ENCODE measurements at regions of chr12 and their contacts with region 1.

Region 1: GRCh38 chr12:65169320-65170208 is at the start of gene LEMD3:
- DNase-seq: peak; percentile 97
- ATAC-seq: peak; percentile 94
- H3K4me3 Mint-ChIP-seq: peak within 1 kb of the TSS; percentile 92
- H3K27ac Mint-ChIP-seq: peak within 1 kb of the TSS; percentile 97
- H3K4me1 Mint-ChIP-seq: peaks cover 30% of the 10 kb centered on the region
- H3K27me3 Mint-ChIP-seq: peaks cover 3% of the 10 kb centered on the region
- total RNA-seq, gene LEMD3: 15.9 to 17.6 TPM

Region 2: DNA sequence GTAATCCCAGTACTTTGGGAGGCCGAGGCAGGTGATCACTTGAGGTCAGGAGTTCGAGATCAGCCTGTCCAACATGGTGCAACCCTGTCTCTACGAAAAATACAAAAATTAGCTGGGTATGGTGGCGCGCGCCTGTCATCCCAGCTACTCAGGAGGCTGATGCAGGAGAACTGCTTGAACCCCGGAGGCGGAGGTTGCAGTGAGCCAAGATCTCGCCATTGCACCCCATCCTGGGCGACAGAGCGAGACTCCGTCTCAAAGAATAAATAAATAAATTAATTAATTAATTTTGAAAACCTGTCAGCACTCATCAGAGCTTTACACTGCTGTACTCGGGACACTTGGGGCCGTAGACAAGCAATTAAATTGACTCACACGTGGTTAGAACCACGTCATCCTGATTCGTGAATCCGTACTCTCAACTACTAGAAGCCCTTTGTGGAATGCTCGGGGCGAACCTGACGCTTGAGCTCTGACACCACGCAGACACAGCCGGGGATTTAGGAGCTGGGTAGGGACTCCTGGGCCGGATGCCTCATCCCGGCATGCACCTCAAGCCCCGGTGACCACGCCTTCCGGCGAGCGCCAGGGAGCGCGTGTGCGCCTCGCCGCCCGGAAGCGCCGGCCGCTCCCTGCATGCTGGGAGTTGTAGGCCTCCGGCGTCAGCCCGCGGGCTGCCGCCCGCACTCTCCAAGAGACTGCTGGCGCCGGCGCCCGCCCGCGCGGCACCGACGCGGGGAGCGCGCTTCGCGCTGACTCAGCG is 765.7 kb before region 1 on chr12 and contains the start of gene XPOT:
- CTCF ChIA-PET with region 1: no interaction called
- POLR2A ChIA-PET with region 1: interaction called, 3 read pairs
- intact Hi-C with region 1: loop called in 1 of 2 experiments (anchors 2 kb)
- DNase-seq: peak; percentile 97
- ATAC-seq: peak; percentile 90
- H3K4me3 Mint-ChIP-seq: peak within 1 kb of the TSS; percentile 97
- H3K27ac Mint-ChIP-seq: peak within 1 kb of the TSS; percentile 96
- H3K4me1 Mint-ChIP-seq: peaks cover 38% of the 10 kb centered on the region
- H3K27me3 Mint-ChIP-seq: no peaks in the 10 kb centered on the region
- total RNA-seq, gene XPOT: 179 to 187 TPM

Region 3: GRCh38 chr12:64759035-64759901 is 410.3 kb before region 1 on chr12 and contains the start of gene GNS:
- CTCF ChIA-PET with region 1: no interaction called
- POLR2A ChIA-PET with region 1: no interaction called
- intact Hi-C with region 1: loop called in 1 of 2 experiments (anchors 1 kb)
- DNase-seq: peak; percentile 97
- ATAC-seq: peak; percentile 88
- H3K4me3 Mint-ChIP-seq: peak within 1 kb of the TSS; percentile 88
- H3K27ac Mint-ChIP-seq: peak within 1 kb of the TSS; percentile 96
- H3K4me1 Mint-ChIP-seq: peaks cover 46% of the 10 kb centered on the region
- H3K27me3 Mint-ChIP-seq: no peaks in the 10 kb centered on the region
- total RNA-seq, gene GNS: 19.9 to 21.9 TPM

Region 4: DNA sequence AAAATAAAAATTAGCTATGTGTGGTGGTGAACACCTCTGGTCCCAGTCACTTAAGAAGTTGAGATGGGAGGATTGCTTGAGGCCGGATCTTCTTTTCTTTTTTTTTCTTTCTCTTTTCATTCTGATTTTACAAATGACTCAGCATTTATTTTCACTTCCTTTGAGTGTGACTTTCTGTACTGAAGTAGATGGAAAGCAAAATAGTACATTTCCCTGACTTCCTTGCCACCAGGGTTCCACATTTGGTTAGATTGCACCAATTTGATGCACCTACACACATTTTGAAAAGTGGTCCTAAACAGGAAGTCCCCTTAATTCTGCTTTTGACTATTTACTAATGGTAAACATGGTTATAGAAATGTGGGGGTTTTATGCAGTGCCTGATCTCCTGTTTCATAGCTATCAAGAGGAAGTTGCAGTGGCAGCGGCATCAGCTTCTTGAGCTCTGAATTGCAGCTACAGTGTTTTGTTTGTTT is 13.2 kb before region 1 on chr12:
- CTCF ChIA-PET with region 1: interaction called, 22 read pairs
- POLR2A ChIA-PET with region 1: interaction called, 14 read pairs
- intact Hi-C with region 1: loop called (anchors 1 kb)
- DNase-seq: peak; percentile 44
- ATAC-seq: peak; percentile 85
- H3K4me3 Mint-ChIP-seq: peak overlapping the region; percentile 3
- H3K27ac Mint-ChIP-seq: peak overlapping the region; percentile 82
- H3K4me1 Mint-ChIP-seq: peaks cover 17% of the 10 kb centered on the region
- H3K27me3 Mint-ChIP-seq: peaks cover 20% of the 10 kb centered on the region

Region 5: GRCh38 chr12:65232476-65233077 is 63.0 kb after region 1 on chr12:
- CTCF ChIA-PET with region 1: interaction called, 19 read pairs
- POLR2A ChIA-PET with region 1: no interaction called
- intact Hi-C with region 1: loop called (anchors 1 to 2 kb)
- DNase-seq: no peak
- ATAC-seq: no peak
- H3K4me3 Mint-ChIP-seq: no peak overlapping the region
- H3K27ac Mint-ChIP-seq: no peak overlapping the region
- H3K4me1 Mint-ChIP-seq: peaks cover 13% of the 10 kb centered on the region
- H3K27me3 Mint-ChIP-seq: no peaks in the 10 kb centered on the region

Region 6: DNA sequence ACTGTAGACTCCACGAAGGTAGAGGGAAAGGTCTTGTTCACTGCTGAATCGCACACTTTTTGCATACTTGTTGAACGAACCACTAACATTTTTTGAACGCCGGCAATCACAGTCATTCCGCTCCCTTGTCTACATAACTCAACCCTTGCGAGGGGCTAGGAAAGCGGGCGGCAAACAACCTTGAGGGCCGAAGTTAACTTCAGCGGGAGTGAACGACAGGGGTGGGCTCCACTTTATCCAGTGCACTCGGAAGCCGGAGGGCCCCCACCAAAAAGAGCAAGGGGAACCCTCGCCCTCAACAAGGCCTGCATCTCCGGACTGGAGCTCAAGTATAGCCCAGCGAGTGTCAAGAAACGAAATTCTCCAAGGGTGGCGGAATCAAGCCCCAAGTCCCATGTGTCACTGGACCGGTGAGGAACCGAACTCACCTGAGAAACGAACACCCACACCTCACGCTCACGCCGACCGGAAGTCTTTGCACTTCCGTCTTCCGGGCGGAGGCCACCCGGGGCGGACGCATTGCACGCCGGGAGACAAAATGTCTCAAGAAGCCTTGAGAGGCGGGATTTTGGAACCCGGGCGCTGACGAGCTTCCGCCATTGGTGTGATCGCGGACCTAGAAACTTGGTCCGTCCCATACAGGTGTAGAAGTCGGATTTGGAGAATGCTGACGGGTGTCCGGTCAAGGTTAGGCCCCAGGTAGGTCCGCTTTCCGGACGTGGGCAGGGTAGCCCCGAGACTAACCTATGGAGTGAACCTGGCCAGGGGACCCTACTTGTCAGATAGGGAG is 960.9 kb after region 1 on chr12 and contains the start of gene LLPH:
- CTCF ChIA-PET with region 1: no interaction called
- POLR2A ChIA-PET with region 1: no interaction called
- intact Hi-C with region 1: loop called (anchors 1 to 5 kb)
- DNase-seq: peak; percentile 95
- ATAC-seq: peak; percentile 95
- H3K4me3 Mint-ChIP-seq: peak within 1 kb of the TSS; percentile 99
- H3K27ac Mint-ChIP-seq: peak within 1 kb of the TSS; percentile 96
- H3K4me1 Mint-ChIP-seq: peaks cover 46% of the 10 kb centered on the region
- H3K27me3 Mint-ChIP-seq: no peaks in the 10 kb centered on the region
- total RNA-seq, gene LLPH: 33.1 to 36.5 TPM

Measured in activated CD4-positive, alpha-beta T cell treated with anti-CD3 and anti-CD28 coated beads for 36 hours (primary cell).